Activated T-helper 2 cell treated with anti-CD3 and anti-CD28 coated beads, Interferon-gamma antibody, Interleukin-2, Interleukin-4, amounts not matched to agents 10 μg/mL and 5 μg/mL and 100 μg/mL, durations not matched to agents 14 hours and 24 hours and 36 hours (primary cell): ENCODE measurements at regions of chr5 and their contacts with region 1.

Region 1: DNA sequence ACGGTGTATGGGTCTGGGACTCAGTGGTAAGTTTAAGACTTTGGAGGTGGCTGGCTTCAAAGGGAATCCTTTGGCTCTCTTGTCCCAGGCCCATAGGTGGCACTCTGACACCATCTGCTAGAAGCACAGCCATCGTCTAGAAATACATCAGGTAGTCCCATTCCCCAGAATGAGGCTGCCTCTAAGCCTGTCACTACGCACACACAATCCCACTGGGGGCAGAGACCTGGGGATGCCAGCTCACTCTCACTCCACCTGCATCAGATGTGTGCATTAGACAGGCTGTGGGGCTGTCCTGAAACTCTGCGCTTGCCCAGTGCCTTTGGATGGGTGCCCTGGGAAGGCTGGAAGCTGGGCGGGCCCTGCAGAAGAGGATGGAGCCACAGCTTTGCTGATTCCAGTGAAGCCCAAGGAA is 127.5 kb upstream of the PANK3 start:
- DNase-seq: peak; percentile 16
- H3K4me3 Mint-ChIP-seq: no peak overlapping the region
- H3K27ac Mint-ChIP-seq: no peak overlapping the region
- H3K4me1 Mint-ChIP-seq: no peaks in the 10 kb centered on the region
- H3K27me3 Mint-ChIP-seq: no peaks in the 10 kb centered on the region

Region 2: DNA sequence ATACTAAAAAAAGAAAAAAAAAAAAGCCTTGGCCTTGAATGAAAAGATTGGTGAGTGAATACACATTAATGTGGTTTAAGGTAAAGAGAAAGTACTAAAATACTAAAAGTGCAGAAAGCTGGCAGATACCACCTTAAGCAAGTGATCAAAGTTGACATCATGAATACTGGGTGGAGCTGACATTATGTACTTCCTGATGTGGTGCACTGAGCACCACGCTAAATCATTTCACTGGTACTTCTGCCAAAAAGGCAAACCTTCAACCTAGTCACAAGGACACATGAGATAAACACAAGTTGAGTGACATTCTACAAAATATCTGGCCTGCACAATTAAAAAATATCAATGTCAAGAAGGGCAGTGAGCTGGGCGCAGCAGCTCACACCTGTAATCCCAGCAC is 93.7 kb before region 1 on chr5:
- intact Hi-C with region 1: no loop called
- DNase-seq: no peak
- H3K4me3 Mint-ChIP-seq: no peak overlapping the region
- H3K27ac Mint-ChIP-seq: no peak overlapping the region
- H3K4me1 Mint-ChIP-seq: peaks cover 13% of the 10 kb centered on the region
- H3K27me3 Mint-ChIP-seq: no peaks in the 10 kb centered on the region

Region 3: GRCh38 chr5:168947212-168947868 is 240.7 kb after region 1 on chr5:
- intact Hi-C with region 1: loop called (anchors 2 kb)
- DNase-seq: peak; percentile 12
- H3K4me3 Mint-ChIP-seq: no peak overlapping the region
- H3K27ac Mint-ChIP-seq: no peak overlapping the region
- H3K4me1 Mint-ChIP-seq: peaks cover 17% of the 10 kb centered on the region
- H3K27me3 Mint-ChIP-seq: no peaks in the 10 kb centered on the region

Region 4: DNA sequence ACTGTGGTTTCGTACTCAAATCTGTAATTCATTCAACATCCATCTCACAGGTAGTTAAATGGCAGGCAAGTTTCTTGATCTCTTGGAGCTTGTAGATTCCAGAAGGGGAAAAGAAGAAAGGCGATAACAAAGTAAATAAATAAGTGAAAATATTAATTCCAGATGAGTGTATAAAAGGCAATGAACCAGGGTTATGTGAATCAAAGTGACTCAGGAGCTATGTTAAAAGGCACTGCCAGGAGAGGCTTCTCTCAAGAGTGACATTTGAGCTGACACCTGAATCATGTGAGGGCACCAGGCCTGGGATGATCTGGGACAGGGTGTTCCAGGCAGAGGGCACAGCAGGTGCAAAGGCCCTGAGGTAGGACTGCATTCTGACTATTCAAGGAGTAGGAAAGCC is 975.4 kb after region 1 on chr5:
- intact Hi-C with region 1: no loop called
- DNase-seq: no peak
- H3K4me3 Mint-ChIP-seq: no peak overlapping the region
- H3K27ac Mint-ChIP-seq: peak overlapping the region; percentile 34
- H3K4me1 Mint-ChIP-seq: no peaks in the 10 kb centered on the region
- H3K27me3 Mint-ChIP-seq: no peaks in the 10 kb centered on the region